Activated CD4-positive, alpha-beta T cell treated with anti-CD3 and anti-CD28 coated beads for 36 hours (primary cell): ENCODE measurements at regions of chr17 and their contacts with region 1.

Region 1: GRCh38 chr17:28335201-28335955 is at the starts of genes IFT20 and TNFAIP1:
- DNase-seq: peak; percentile 99
- ATAC-seq: peak; percentile 97
- H3K4me3 Mint-ChIP-seq: peak within 1 kb of the TSS; percentile 96
- H3K27ac Mint-ChIP-seq: peak within 1 kb of the TSS; percentile 91
- H3K4me1 Mint-ChIP-seq: peaks cover 36% of the 10 kb centered on the region
- H3K27me3 Mint-ChIP-seq: no peaks in the 10 kb centered on the region
- total RNA-seq, gene IFT20: 12.9 to 17.3 TPM
- total RNA-seq, gene TNFAIP1: 25.5 to 26.1 TPM

Region 2: DNA sequence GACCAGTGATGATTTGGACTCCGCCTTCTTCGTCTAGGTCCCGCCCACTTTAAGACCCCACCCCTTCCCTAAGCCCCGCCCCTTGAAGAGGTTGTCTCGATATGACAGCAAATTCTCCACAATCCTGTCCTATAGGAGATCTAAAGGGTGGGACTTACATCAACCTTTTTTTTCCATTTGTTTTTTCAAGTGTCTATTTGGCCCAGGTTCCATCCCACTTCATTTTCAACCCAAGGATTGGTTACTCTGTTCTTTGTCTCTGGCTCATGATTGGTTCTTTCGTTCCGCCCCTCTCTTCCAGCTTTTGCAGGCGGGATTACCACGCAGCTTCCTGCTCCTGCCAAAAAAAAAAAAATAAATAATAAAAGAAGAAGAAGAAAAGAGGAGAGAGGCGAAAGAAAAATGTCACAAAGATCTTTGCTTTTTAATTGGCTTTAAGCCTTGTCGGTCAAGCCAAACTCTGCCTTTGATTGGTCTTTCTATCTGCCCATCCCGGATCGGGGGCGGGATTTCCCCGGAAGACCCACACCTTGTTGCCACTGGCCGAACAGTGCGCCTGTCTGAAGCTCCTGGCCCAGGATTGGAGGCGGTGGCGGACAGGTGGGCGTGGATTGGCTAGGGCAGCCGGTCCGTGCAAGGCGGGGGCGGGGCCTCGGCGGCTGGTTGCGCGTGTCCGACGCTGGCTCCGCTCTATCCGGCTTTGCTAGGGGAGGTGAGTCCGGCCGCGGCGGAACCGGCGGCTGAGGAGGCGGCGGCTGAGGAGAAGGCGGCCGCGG is 294.1 kb before region 1 on chr17:
- CTCF ChIA-PET with region 1: no interaction called
- POLR2A ChIA-PET with region 1: interaction called, 4 read pairs
- intact Hi-C with region 1: loop called (anchors 1 kb)
- DNase-seq: peak; percentile 100
- ATAC-seq: peak; percentile 96
- H3K4me3 Mint-ChIP-seq: peak overlapping the region; percentile 79
- H3K27ac Mint-ChIP-seq: peak overlapping the region; percentile 74
- H3K4me1 Mint-ChIP-seq: peaks cover 52% of the 10 kb centered on the region
- H3K27me3 Mint-ChIP-seq: no peaks in the 10 kb centered on the region

Region 3: GRCh38 chr17:28318759-28319660 is 16.4 kb before region 1 on chr17 and contains the start of gene TMEM97:
- CTCF ChIA-PET with region 1: interaction called, 10 read pairs
- POLR2A ChIA-PET with region 1: interaction called, 5 read pairs
- intact Hi-C with region 1: loop called (anchors 1 kb)
- DNase-seq: peak; percentile 98
- ATAC-seq: peak; percentile 99
- H3K4me3 Mint-ChIP-seq: peak within 1 kb of the TSS; percentile 96
- H3K27ac Mint-ChIP-seq: peak within 1 kb of the TSS; percentile 88
- H3K4me1 Mint-ChIP-seq: peaks cover 30% of the 10 kb centered on the region
- H3K27me3 Mint-ChIP-seq: no peaks in the 10 kb centered on the region
- total RNA-seq, gene TMEM97: 31.0 to 49.3 TPM

Region 4: GRCh38 chr17:28384281-28385036 is 49.1 kb after region 1 on chr17:
- CTCF ChIA-PET with region 1: interaction called, 5 read pairs
- POLR2A ChIA-PET with region 1: no interaction called
- intact Hi-C with region 1: loop called (anchors 1 to 5 kb)
- DNase-seq: peak; percentile 85
- ATAC-seq: peak; percentile 93
- H3K4me3 Mint-ChIP-seq: peak overlapping the region; percentile 86
- H3K27ac Mint-ChIP-seq: peak overlapping the region; percentile 73
- H3K4me1 Mint-ChIP-seq: peaks cover 17% of the 10 kb centered on the region
- H3K27me3 Mint-ChIP-seq: peaks cover 11% of the 10 kb centered on the region

Region 5: GRCh38 chr17:28716740-28717577 is 381.6 kb after region 1 on chr17:
- CTCF ChIA-PET with region 1: no interaction called
- POLR2A ChIA-PET with region 1: interaction called, 4 read pairs
- intact Hi-C with region 1: loop called in 1 of 2 experiments (anchors 1 kb)
- DNase-seq: peak; percentile 29
- ATAC-seq: no peak
- H3K4me3 Mint-ChIP-seq: peak overlapping the region; percentile 57
- H3K27ac Mint-ChIP-seq: no peak overlapping the region
- H3K4me1 Mint-ChIP-seq: peaks cover 30% of the 10 kb centered on the region
- H3K27me3 Mint-ChIP-seq: peaks cover 19% of the 10 kb centered on the region